ENCODE measurements at regions of chr19 and their contacts with region 1.

Region 1: GRCh38 chr19:32224371-32225244 is 120.8 kb upstream of the ZNF507 start:
- DNase-seq: peak; percentile 86
- CTCF ChIP-seq: peak; percentile 96

Region 2: GRCh38 chr19:30682999-30683536 is 1541.5 kb before region 1 on chr19:
- CTCF ChIA-PET with region 1: interaction called, 63 read pairs
- POLR2A ChIA-PET with region 1: no interaction called
- DNase-seq: peak; percentile 78
- CTCF ChIP-seq: peak; percentile 97

Region 3: DNA sequence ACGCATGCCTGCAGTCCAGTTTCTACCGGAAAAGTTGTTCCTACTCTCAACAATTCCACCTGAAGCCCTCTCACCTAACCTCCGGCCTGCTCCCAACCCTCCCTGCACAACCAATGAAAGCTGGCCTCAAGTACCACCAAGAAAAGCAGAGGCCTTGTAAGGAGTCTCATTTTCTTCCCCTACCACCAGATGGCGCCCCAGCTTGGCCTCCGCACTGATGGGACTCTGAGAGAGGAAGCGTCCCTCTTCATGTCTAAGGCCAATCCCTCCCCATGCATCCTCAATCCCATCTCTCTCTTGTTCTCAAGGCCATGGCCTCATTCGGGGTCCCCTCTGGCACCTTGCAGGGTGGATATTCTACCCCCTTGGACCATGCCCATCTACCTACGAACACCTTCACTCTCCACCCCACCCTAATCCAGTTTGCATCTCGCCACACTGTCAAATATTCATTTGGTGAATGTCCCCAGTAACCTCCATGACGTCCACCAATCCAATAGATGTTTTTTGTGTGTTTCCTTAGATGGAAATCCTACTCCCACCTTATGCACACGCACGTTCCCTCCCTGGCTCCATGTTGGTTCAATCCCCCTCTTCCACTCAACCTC is 1439.7 kb before region 1 on chr19:
- CTCF ChIA-PET with region 1: interaction called, 25 read pairs
- POLR2A ChIA-PET with region 1: no interaction called
- DNase-seq: peak; percentile 33
- CTCF ChIP-seq: peak; percentile 32

Region 4: DNA sequence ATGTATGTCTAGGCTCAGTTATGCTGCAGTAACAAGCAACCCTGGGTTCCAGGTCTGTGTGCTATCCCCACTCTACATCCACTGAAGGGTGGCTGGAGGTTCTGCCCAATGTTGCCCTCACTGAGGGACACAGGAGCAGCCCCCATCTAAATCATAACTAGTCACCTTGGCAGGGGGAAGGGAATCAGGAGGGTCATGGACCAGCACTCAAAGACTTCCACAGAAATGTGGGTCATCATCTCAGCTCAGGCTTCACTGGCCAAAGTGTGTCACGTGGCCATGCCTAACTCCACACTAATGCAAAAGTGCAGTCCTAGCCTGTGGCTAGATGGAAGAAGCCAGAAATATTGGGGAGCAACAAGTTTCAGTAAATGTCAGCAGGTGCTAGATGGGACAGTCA is 16.5 kb before region 1 on chr19:
- CTCF ChIA-PET with region 1: interaction called, 12 read pairs
- POLR2A ChIA-PET with region 1: no interaction called
- DNase-seq: no peak
- CTCF ChIP-seq: no peak

Region 5: DNA sequence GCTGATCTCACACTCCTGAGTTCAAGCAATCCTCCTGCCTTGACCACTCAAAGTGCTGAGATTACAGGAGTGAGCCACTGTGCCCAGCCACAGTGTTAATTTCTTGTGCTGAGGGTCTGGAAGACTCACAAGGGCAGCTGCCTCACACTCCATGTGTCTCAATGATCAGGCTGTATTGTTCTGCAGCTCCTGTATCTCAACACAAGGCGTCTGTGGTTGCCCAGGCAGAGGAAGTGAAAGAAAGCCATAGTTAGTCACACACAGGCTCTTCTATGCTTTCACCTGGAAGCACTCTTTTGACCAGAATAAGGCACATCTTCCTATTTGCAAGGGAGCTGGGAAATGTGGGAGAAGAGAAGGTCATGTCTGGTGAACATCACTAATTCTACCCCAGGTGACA is 13.5 kb after region 1 on chr19:
- CTCF ChIA-PET with region 1: interaction called, 27 read pairs
- POLR2A ChIA-PET with region 1: no interaction called
- DNase-seq: no peak
- CTCF ChIP-seq: no peak

Measured in GM10248 (cell line).